Calu3 (cell line): ENCODE measurements at regions of chr11 and their contacts with region 1.

Region 1: DNA sequence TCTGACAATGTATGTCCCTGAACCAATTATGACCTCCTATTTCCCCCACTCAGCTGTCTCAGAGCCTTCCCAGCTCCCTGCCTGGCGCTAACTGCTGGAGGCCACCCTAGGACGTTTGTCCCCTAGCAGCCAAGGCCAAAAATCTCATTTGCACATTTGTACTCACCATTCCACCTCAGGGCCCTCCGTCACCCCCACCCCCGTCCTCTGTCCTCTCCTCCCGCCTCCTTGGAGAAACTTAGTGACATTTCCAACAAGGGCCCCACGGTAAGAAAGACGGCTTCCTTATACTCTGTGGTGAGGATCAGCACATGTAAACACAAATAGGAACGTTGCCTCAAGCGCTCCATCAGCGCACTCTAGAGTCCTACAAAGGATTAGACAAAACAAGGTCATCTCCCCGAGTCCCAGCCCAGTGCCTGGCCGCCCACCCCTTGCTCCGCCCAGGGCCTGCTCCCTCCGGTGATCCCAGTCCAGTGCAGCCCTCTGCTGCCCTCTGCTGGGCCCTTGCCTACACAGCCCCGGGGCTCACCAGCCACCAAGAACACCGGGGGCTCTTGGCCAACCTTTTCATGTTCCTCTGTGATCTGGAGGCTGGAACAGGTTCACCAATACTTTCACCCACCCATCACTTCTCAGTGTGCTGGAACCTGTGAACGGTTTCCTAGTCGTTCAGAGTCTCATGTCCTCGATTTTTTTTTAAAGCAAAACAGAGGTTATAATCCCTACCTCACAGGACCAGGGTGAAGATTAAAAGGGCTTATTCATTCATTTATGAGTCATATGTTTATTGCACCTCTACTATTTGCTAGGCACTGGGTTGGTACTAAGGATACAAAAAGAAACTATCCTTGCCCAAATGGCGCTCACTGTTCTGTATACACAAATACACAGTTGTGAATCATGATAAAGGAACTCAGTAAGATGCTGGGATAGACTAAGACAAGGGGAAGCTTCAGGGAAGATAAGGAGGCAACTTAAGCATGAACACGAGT is 15.3 kb upstream of the CTR9 start:
- DNase-seq: peak; percentile 96
- H3K4me3 Mint-ChIP-seq: peak overlapping the region; percentile 26
- H3K27ac Mint-ChIP-seq: peak overlapping the region; percentile 21
- H3K4me1 Mint-ChIP-seq: peaks cover 15% of the 10 kb centered on the region
- H3K27me3 Mint-ChIP-seq: peaks cover 18% of the 10 kb centered on the region
- CTCF ChIP-seq: peak; percentile 94

Region 2: DNA sequence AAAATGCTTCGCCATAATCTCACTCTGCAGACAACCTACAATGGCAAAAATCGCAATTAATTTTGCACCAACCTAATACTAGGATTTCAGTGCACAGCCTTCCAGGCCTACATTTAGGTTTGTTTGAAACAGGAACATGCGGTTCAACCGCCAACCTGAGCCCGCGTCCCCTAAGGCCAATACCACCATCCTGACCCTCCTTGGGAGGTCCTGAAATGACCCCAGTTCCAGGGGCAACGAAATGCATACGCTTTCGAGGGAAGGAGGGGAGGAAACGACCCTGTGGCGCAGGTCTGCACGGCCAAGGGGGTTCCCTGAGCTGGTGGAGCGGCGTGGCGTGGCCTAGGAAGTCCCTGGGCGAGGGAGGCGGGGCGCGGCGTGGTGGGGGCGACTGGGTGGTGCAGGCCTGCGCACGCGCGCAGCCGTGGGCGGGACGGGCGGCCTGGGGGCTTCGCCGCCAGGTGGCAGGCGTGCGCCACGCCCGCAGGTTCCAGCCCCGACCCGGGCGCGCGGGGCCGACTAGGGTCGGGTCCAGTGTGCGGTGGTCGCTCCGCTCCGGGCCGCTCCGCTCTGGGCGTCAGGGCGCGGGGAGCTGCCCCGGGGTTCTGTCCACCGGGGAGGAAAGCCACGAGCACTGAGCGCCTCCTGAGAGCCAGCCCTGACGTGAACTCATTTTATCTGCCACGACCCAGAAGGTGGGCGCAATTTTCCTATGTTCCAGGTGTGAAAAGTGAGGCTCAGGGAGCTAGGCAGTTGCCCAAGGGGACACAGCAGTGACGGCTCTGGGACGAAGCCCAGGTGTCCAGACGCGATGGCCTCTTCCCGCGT is 977.8 kb before region 1 on chr11:
- CTCF ChIA-PET with region 1: no interaction called
- intact Hi-C with region 1: loop called (anchors 5 kb)
- DNase-seq: peak; percentile 87
- H3K4me3 Mint-ChIP-seq: peak overlapping the region; percentile 81
- H3K27ac Mint-ChIP-seq: peak overlapping the region; percentile 95
- H3K4me1 Mint-ChIP-seq: peaks cover 21% of the 10 kb centered on the region
- H3K27me3 Mint-ChIP-seq: no peaks in the 10 kb centered on the region
- CTCF ChIP-seq: peak; percentile 88

Region 3: GRCh38 chr11:10405855-10406592 is 329.8 kb before region 1 on chr11:
- CTCF ChIA-PET with region 1: interaction called, 14 read pairs
- intact Hi-C with region 1: loop called (anchors 1 kb)
- DNase-seq: peak; percentile 74
- H3K4me3 Mint-ChIP-seq: no peak overlapping the region
- H3K27ac Mint-ChIP-seq: no peak overlapping the region
- H3K4me1 Mint-ChIP-seq: peaks cover 12% of the 10 kb centered on the region
- H3K27me3 Mint-ChIP-seq: peaks cover 4% of the 10 kb centered on the region
- CTCF ChIP-seq: no peak

Region 4: DNA sequence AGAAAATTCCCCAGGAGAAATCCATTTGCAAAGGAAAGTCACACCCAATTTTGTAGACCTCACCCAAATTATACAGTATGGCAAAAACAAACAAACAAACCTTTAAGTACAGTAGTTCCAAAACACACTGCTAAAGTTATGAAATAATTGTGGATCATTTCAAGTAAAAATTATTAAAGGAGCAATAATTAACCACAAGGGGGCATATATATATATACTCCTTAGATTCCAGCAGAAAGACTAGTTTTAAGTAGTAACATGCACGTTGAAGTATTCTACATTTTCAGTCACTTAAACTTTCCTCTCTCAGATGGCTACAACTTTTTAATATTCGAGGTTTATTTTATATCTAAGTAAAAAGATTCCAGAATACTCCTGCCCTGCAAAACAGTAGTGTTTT is 221.6 kb before region 1 on chr11:
- CTCF ChIA-PET with region 1: no interaction called
- intact Hi-C with region 1: loop called (anchors 2 kb)
- DNase-seq: no peak
- H3K4me3 Mint-ChIP-seq: no peak overlapping the region
- H3K27ac Mint-ChIP-seq: no peak overlapping the region
- H3K4me1 Mint-ChIP-seq: no peaks in the 10 kb centered on the region
- H3K27me3 Mint-ChIP-seq: no peaks in the 10 kb centered on the region
- CTCF ChIP-seq: peak; percentile 19

Region 5: GRCh38 chr11:10623797-10624761 is 111.7 kb before region 1 on chr11:
- CTCF ChIA-PET with region 1: no interaction called
- intact Hi-C with region 1: loop called (anchors 2 kb)
- DNase-seq: peak; percentile 49
- H3K4me3 Mint-ChIP-seq: no peak overlapping the region
- H3K27ac Mint-ChIP-seq: no peak overlapping the region
- H3K4me1 Mint-ChIP-seq: no peaks in the 10 kb centered on the region
- H3K27me3 Mint-ChIP-seq: peaks cover under 1% of the 10 kb centered on the region
- CTCF ChIP-seq: peak; percentile 23